ENCODE measurements at regions of chr17 and their contacts with region 1.

Region 1: GRCh38 chr17:17836250-17836817 is 452 bp downstream of the SREBF1 start:
- DNase-seq: peak; percentile 98
- H3K4me3 Mint-ChIP-seq: peak overlapping the region; percentile 80
- H3K27ac Mint-ChIP-seq: peak overlapping the region; percentile 85
- H3K4me1 Mint-ChIP-seq: peaks cover 72% of the 10 kb centered on the region
- H3K27me3 Mint-ChIP-seq: no peaks in the 10 kb centered on the region

Region 2: GRCh38 chr17:17580662-17581470 is 255.5 kb before region 1 on chr17:
- CTCF ChIA-PET with region 1: no interaction called
- POLR2A ChIA-PET with region 1: no interaction called
- DNase-seq: no peak
- H3K4me3 Mint-ChIP-seq: no peak overlapping the region
- H3K27ac Mint-ChIP-seq: no peak overlapping the region
- H3K4me1 Mint-ChIP-seq: no peaks in the 10 kb centered on the region
- H3K27me3 Mint-ChIP-seq: no peaks in the 10 kb centered on the region

Region 3: DNA sequence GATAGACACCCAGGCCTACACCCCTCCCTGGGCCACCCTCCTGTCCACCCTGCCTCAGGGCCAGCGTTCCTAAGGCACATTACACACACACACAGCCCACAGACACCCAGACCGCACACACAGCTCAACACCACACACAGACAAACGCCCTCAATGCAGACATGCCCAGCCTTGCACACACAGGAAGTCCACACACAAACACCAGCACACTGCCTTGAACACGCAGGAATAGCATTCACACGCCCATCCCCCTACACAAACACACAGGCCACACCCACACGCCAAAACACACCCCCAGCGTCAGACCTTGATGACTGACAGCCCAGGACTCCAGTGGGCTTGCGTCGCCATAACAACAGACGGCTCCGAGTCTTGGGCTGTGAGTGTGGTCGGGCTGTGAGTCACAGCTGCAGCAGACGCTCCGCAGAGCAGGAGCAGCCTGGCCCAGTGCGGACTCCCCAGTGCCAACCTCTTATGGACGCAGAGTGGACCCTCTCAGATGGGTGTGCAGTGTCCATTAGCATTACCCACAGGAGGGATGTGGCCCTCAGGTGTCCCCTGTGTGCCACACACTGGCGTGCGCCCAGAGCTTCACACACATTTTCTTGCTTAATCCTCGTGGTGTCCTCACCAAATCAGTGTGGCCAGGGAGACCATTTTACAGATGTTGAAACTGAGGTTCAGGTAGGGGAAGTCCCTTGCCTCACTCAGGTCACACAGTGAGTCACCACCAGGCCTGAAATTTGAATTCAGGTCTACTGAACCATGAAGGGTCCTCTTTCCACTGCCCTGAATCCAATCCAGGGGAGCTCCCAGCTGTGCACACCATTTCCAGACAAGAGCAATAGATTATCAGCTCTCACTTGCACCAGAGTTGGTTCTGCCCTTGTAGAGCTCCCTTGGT is 172.9 kb before region 1 on chr17:
- CTCF ChIA-PET with region 1: no interaction called
- POLR2A ChIA-PET with region 1: no interaction called
- DNase-seq: peak; percentile 77
- H3K4me3 Mint-ChIP-seq: no peak overlapping the region
- H3K27ac Mint-ChIP-seq: no peak overlapping the region
- H3K4me1 Mint-ChIP-seq: peaks cover 15% of the 10 kb centered on the region
- H3K27me3 Mint-ChIP-seq: peaks cover 6% of the 10 kb centered on the region

Region 4: GRCh38 chr17:17752089-17752820 is 84.1 kb before region 1 on chr17:
- CTCF ChIA-PET with region 1: no interaction called
- POLR2A ChIA-PET with region 1: interaction called, 16 read pairs
- DNase-seq: peak; percentile 98
- H3K4me3 Mint-ChIP-seq: peak overlapping the region; percentile 96
- H3K27ac Mint-ChIP-seq: peak overlapping the region; percentile 96
- H3K4me1 Mint-ChIP-seq: peaks cover 59% of the 10 kb centered on the region
- H3K27me3 Mint-ChIP-seq: no peaks in the 10 kb centered on the region

Region 5: DNA sequence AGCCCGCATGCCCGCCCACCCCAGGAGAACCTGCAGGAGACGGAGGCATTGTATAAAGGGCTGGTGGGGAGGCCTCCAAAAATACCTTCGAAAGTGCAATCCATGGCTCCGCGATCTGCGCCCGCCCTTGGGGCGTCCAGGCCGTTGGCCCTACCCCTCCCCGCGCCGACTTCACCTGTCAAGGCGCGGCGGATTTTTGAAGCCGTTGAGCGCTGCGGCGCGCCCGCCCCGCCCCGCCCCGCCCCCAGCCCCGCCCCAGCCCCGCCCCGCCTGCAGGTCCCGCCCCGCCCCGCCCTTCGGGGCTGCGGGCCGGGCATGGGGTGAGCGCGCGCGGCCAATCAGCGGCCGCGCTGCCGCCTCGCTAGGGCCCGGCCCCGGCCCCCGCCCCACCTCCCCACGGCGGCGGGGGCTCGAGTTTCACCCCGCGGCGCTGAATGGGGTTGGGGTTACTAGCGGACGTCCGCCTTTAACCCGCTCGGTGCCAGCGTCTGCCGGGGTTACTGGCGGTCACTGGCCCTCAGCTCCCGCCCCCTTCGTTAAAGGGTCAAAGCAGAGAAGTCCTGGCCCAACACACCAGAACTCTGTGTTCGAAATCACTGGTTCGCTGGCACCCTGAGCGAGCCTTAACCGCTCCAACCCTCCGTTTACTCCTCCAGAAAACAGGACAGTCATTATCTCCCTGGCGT is 12.8 kb before region 1 on chr17:
- CTCF ChIA-PET with region 1: interaction called, 16 read pairs
- POLR2A ChIA-PET with region 1: interaction called, 322 read pairs
- DNase-seq: peak; percentile 90
- H3K4me3 Mint-ChIP-seq: peak overlapping the region; percentile 76
- H3K27ac Mint-ChIP-seq: peak overlapping the region; percentile 95
- H3K4me1 Mint-ChIP-seq: peaks cover 93% of the 10 kb centered on the region
- H3K27me3 Mint-ChIP-seq: no peaks in the 10 kb centered on the region

Region 6: DNA sequence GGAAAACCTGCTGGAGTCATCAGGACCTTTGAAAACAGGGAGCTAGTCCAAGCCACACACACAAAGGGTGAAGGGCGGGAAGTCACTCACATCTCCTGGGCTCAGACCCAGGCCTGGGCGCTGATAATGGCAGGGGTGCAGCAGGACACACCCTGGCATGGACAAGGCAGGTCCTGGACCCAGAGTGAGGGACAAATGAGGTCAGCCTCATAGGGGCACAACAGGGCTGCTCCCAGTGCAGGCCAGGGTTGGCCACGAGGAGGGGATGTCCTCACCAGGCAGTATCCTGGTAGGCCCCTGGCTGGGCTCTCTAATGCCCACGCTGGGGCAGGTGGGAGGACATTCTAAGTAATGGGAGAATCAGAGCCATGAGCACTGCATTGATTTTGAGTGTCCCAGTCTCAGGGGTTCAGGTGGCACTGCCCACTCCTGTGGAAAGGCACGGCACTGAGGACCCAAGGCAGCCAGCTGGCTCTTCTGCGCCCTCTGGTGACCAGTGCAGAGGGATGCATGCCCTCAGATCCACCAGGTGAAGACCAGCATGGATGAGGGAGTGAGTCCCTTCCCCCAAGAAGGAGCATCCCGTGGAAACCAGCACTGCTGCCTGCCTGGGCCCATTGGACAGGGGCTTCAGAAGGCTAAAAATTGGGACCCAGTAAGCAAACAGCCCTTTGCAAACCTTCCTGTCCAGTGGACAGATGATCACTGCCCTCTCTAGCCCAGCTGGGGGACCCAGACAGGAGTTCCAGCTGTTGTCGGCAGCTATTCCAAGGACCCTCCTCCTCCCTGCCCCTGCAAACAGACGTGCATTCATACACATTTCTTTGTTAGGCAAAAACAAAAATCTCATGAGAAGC is 23.8 kb after region 1 on chr17:
- CTCF ChIA-PET with region 1: interaction called, 23 read pairs
- POLR2A ChIA-PET with region 1: interaction called, 170 read pairs
- DNase-seq: peak; percentile 76
- H3K4me3 Mint-ChIP-seq: no peak overlapping the region
- H3K27ac Mint-ChIP-seq: no peak overlapping the region
- H3K4me1 Mint-ChIP-seq: peaks cover 34% of the 10 kb centered on the region
- H3K27me3 Mint-ChIP-seq: no peaks in the 10 kb centered on the region

Region 7: GRCh38 chr17:17972126-17972951 is 136.0 kb after region 1 on chr17 and contains the starts of genes DRC3 and TOM1L2:
- CTCF ChIA-PET with region 1: no interaction called
- POLR2A ChIA-PET with region 1: interaction called, 13 read pairs
- DNase-seq: peak; percentile 100
- H3K4me3 Mint-ChIP-seq: peak within 1 kb of the TSS; percentile 93
- H3K27ac Mint-ChIP-seq: peak within 1 kb of the TSS; percentile 83
- H3K4me1 Mint-ChIP-seq: peaks cover 42% of the 10 kb centered on the region
- H3K27me3 Mint-ChIP-seq: no peaks in the 10 kb centered on the region
- total RNA-seq, gene DRC3: not detected
- total RNA-seq, gene TOM1L2: 29.3 to 30.3 TPM

Measured in activated CD4-positive, alpha-beta memory T cell treated with anti-CD3 and anti-CD28 coated beads, Interleukin-2, amount 10 ng/mL, durations not matched to agents 7 days and 5 days (primary cell).